ENCODE measurements at regions of chr2 and their contacts with region 1.

Region 1: DNA sequence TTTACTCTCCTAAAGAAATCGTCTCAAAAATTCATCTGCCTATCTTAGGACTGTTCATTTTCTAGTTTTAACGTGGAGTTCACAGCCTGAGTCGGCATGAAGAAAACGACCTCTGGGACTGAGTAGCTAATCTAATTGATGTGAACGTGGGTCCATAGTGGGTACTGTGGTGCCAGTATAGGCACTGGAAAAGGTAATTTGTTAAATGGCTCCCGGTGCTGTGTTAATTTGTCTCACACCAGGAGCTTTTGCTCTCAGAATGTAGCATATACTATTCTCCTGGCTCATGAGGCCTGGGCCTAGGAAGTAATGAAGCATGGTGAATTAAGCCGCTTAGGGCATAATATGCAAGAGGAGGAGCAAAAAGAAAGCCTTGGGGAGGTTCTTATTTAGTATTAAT is 414.4 kb upstream of the NXPH2 start:
- DNase-seq: no peak
- ATAC-seq: no peak
- H3K4me3 ChIP-seq: no peak overlapping the region
- H3K27ac ChIP-seq: no peak overlapping the region
- H3K4me1 ChIP-seq: no peaks in the 10 kb centered on the region
- H3K27me3 ChIP-seq: no peaks in the 10 kb centered on the region
- CTCF ChIP-seq: no peak
- EP300 ChIP-seq: no peak
- POLR2A ChIP-seq: no peak
- RAD21 ChIP-seq: no peak

Region 2: DNA sequence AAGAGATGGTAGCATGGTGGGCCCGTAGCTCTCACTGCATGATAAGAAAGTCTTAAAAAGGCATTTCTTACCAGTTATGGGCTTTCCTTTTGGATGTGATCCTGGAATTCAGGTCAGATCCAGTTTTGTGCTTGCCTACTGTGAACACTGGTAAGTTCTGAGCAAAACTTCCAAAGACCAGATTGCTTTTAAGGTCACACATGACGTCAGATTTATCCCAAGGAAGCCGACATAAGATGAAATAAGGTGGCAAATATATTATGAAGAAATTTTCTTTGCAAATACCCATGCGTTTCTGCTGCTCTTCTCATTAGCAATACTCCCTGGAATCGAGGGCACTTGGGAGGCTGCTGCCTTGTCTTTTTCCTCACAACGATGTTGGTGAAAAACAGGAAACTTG is 1646.7 kb before region 1 on chr2:
- CTCF ChIA-PET with region 1: no interaction called
- POLR2A ChIA-PET with region 1: no interaction called
- in situ Hi-C with region 1: no loop called
- intact Hi-C with region 1: loop called (anchors 5 kb)
- DNase-seq: no peak
- ATAC-seq: no peak
- H3K4me3 ChIP-seq: no peak overlapping the region
- H3K27ac ChIP-seq: no peak overlapping the region
- H3K4me1 ChIP-seq: no peaks in the 10 kb centered on the region
- H3K27me3 ChIP-seq: no peaks in the 10 kb centered on the region
- CTCF ChIP-seq: no peak
- EP300 ChIP-seq: no peak
- POLR2A ChIP-seq: no peak
- RAD21 ChIP-seq: no peak

Measured in HepG2 (cell line).